ENCODE measurements at regions of chr9 and their contacts with region 1.

Region 1: DNA sequence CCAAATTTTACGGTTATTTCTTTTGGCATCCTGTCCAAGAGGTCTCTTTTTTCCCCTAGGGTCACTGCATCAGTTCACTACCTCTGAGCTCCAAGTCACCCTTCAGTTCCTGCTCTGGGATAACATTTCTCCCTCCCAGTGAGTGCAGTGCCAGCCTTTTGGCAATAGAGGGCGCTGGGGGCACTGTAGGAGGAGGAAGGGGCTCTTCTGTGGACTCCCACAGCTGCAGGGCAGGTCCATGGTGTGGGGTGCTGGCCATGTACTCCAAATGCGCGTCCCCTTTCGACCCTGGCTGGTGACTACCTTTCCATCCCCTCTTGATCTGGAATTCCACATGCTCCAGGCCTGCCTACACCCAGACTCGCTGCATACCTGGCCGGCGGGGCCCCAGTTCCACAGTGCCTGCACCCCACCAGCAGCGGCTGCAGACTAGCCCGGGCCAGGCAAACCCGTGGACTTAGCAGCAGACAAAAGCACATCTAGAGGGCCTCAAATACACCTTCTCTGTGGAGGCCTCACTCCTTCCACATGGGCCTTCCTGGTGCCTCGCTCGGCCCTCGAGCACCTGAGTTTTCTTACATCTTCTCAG is 20.4 kb upstream of the NINJ1 start:
- DNase-seq: no peak
- H3K4me3 ChIP-seq: no peak overlapping the region
- H3K27me3 ChIP-seq: no peaks in the 10 kb centered on the region; the same call in 1 of the 2 replicates
- CTCF ChIP-seq: peak; percentile 59

Region 2: DNA sequence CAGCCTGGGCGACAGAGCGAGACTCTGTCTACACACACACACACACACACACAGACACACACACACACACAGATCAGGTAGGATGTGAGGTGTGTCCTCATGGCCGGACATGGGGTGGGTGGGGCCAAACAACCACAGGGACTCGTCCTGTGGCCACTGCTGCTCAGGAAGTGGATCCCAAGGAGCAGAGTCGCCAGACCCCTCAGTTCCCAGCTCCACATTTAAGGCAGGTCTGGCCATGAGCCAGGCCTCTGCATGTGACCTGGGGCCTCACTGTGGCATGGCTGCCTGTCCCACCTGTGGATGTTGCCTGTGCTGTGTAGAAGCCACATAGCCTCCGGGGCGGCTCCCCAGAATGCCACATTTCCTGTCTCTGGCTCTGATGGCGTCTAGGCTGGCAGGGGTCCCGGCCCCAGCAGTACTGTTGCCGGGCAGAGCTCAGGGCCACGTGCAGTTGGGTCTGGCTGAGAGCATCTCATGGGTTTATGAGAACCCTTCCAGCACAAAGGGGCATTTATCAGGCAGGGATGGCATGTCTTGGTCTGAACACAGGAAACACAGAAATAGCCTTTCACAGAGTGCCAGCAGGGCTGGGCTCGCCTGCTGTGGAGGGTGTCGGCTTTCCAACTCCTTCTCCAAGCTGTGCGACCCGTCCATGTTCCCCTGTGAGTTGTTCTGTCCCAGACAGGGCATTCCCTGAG is 10.4 kb before region 1 on chr9:
- CTCF ChIA-PET with region 1: interaction called, 17 read pairs
- POLR2A ChIA-PET with region 1: no interaction called
- DNase-seq: no peak
- H3K4me3 ChIP-seq: no peak overlapping the region
- H3K27me3 ChIP-seq: no peaks in the 10 kb centered on the region
- CTCF ChIP-seq: no peak

Measured in BJ (cell line).